CD8-positive, alpha-beta memory T cell (primary cell): ENCODE measurements at regions of chr12 and their contacts with region 1.

Region 1: DNA sequence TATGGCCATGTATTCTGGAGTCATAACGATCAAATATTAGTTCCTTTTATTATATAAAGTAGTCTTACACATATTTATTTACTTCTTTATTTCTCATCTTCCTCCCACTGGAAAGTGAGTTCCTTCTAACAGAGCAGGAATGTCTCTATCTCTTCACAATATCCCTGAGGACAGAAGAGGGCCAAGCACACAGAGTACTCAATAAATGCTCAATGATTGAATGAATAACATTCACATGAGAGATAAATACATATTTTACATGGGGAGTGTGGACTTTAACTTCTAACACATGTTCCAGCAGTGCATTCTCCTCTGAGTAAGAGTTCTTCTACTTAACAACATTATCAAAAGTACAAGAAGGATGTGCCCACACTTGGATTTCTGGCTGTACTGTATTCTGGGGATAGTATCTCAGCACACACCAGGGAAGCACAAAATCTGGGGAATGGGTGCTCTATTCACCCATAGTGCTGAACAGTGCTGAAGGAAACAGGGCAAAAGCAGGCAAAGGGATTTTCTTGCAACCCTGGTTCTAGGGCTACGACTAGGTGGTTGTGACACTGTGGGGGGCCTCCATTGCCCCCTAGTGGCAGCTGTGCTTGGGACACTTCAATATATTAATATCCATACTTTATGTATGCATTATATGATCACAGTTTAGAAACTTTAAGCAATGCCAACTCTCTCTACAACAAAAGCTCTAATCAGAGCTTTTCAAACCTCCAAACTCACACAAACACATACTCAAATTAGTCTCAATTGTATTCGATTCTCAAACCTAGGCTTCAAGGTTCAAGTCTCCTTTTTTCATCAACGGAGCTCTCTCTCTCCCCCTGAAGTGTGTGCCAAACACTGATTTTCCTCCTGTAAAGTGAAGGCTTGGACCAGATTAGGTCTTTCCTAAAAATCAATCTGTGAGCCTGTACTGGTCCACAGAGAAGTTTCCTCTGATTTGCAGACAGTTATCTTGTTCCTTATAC is 115.5 kb downstream of the SLC2A13 start:
- DNase-seq: peak; percentile 26 to 63 (median 37)
- H3K4me3 ChIP-seq: no peak overlapping the region
- H3K4me3 Mint-ChIP-seq: no peak overlapping the region
- H3K27ac ChIP-seq: no peak overlapping the region
- H3K27ac Mint-ChIP-seq: peak overlapping the region in 2 of 8 donors; percentile 13 to 21
- H3K4me1 ChIP-seq: no peaks in the 10 kb centered on the region
- H3K4me1 Mint-ChIP-seq: peaks cover 3 to 14% (median 7%) of the 10 kb centered on the region in 3 donors
- H3K27me3 ChIP-seq: no peaks in the 10 kb centered on the region
- H3K27me3 Mint-ChIP-seq: no peaks in the 10 kb centered on the region

Region 2: DNA sequence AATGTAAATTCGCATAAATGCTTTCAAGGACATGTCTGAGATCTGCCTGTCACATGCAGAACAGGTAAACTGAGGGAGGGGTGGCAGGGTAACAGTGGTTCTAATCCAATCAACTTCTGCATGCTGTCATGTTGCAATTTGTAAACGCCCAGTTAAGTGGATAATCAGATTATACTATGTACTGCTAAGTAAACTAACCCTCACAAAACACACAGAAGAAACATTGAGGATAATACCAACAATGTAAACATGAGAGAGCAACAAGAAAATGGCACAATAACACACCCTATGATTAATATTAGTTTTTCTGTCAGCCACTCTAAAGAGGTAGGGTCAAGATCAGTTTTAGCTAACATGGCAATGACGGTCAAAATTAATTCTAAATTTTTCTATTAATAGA is 671.2 kb before region 1 on chr12:
- CTCF ChIA-PET with region 1: interaction called, 10 read pairs
- POLR2A ChIA-PET with region 1: no interaction called
- DNase-seq: no peak
- H3K4me3 ChIP-seq: no peak overlapping the region
- H3K4me3 Mint-ChIP-seq: no peak overlapping the region
- H3K27ac ChIP-seq: no peak overlapping the region
- H3K27ac Mint-ChIP-seq: peak overlapping the region in 1 of 8 donors; percentile 33
- H3K4me1 ChIP-seq: no peaks in the 10 kb centered on the region
- H3K4me1 Mint-ChIP-seq: peaks cover 4 to 7% (median 4%) of the 10 kb centered on the region in 3 donors
- H3K27me3 ChIP-seq: no peaks in the 10 kb centered on the region
- H3K27me3 Mint-ChIP-seq: no peaks in the 10 kb centered on the region